Calu3 (cell line): ENCODE measurements at regions of chr14 and their contacts with region 1.

Region 1: GRCh38 chr14:63174760-63175211 is 29.5 kb upstream of the RHOJ start:
- DNase-seq: peak; percentile 27
- H3K4me3 Mint-ChIP-seq: no peak overlapping the region
- H3K27ac Mint-ChIP-seq: no peak overlapping the region
- H3K4me1 Mint-ChIP-seq: peaks cover 6% of the 10 kb centered on the region
- H3K27me3 Mint-ChIP-seq: no peaks in the 10 kb centered on the region
- CTCF ChIP-seq: peak; percentile 31

Region 2: GRCh38 chr14:63078578-63078977 is 96.2 kb before region 1 on chr14:
- CTCF ChIA-PET with region 1: no interaction called
- intact Hi-C with region 1: no loop called
- DNase-seq: no peak
- H3K4me3 Mint-ChIP-seq: no peak overlapping the region
- H3K27ac Mint-ChIP-seq: no peak overlapping the region
- H3K4me1 Mint-ChIP-seq: no peaks in the 10 kb centered on the region
- H3K27me3 Mint-ChIP-seq: no peaks in the 10 kb centered on the region
- CTCF ChIP-seq: no peak

Region 3: DNA sequence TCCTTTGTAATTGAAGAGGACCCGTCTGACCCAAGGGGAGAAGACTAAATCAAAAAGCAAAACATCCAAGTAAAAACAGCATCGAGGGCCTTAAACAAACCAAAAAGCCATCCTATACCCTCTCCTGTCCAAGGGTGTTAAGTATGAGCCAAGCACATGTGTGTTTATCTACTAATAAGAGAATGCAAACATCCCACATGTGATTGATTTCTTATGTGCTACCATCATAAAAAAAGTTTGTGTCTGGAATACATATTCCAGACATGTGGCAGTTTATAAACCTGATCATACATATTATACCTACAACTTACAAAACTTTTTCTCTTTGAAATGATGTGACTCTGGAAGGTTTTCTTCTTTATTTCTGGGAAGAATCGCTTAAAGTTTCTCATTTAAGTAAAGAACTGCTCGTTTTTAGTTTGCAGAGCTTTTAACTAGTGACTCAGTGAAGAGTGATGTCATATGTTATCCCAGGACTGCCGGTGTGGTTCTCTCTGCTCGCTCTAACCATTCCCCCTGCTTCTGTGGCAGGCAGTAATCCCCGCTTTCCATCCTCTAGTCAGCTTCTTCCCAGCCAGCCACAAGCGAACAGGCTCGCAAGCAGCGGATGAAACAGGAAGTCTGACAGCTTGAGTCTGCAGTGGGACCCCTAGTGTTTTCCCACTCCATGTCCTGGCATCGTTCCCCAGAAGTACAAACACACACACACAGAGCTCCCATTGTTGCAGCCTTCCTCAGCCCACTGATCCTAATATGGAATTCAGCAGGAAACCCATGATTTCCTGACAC is 29.0 kb after region 1 on chr14:
- CTCF ChIA-PET with region 1: interaction called, 5 read pairs
- intact Hi-C with region 1: loop called (anchors 2 kb)
- DNase-seq: peak; percentile 57
- H3K4me3 Mint-ChIP-seq: no peak overlapping the region
- H3K27ac Mint-ChIP-seq: no peak overlapping the region
- H3K4me1 Mint-ChIP-seq: no peaks in the 10 kb centered on the region
- H3K27me3 Mint-ChIP-seq: no peaks in the 10 kb centered on the region
- CTCF ChIP-seq: no peak

Region 4: DNA sequence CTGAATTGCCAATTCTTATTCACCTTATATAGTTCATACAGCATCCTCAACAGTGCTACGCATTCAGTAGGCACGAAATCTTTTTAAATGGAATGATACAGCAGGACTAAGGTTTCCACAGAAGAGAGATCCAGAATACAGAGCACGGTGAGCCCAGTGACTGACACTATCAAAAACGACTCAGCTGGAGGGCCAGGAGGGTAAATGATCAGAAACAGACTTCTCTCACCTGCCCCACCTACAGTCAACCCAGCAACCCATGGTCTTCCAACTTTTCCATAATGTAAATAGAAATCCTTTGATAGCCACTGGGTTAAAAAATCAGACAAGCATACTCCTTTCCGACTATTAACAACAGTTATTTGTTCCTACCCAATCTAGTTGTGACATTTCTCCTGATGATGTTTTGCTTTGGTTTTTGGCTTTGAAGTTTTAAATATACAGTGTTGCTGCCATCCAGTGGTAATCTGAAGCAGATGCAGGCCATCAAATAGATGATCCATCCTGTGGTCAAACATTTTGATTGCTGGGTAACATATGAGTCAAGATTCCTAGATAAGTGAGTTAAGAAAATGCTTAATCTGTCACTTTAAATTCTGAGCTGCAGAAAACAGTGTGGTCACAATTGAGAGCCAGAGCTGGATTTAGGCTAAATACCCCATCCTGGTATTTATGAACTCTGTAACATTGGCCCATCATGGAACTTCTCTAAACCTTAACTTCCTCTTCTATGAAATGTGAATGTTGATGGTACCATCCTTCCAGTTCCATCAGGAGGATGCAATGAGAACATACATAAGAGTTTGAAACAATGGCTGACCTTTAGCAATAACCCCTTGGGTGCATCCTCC is 101.9 kb after region 1 on chr14:
- CTCF ChIA-PET with region 1: interaction called, 7 read pairs
- intact Hi-C with region 1: loop called (anchors 1 kb)
- DNase-seq: peak; percentile 12
- H3K4me3 Mint-ChIP-seq: no peak overlapping the region
- H3K27ac Mint-ChIP-seq: no peak overlapping the region
- H3K4me1 Mint-ChIP-seq: no peaks in the 10 kb centered on the region
- H3K27me3 Mint-ChIP-seq: no peaks in the 10 kb centered on the region
- CTCF ChIP-seq: peak; percentile 49